MCF 10A (cell line): ENCODE measurements at regions of chr12 and their contacts with region 1.

Region 1: DNA sequence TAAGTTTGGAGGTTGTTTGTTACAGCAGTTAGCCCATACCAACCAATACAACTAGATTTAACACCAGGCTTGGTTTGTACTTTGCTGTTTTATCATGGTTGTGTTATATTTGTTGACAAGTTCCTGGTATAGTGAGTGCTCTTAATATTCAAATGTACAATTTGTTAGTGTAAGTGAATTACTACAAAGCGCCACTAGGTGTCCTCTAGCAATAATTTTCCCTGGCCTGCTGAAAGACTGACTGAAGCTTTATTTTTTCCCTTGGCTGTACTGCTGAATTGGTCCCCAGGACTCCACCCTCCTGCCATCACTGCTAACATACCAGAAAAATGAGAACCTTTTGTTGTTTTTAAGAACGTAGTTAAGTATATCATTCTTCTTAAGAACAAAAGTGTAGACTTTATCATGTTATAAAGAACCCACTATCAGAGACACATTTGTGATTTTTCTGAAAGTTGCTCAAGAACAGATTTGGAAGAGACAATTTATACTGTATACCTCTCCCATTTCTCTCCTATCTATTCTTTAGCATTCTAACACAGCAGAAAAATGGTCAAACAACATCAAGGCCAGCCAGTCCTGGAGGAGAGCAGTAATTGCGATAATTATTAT is 75.3 kb upstream of the FAR2 start:
- DNase-seq: peak; percentile 49
- H3K4me3 Mint-ChIP-seq: no peak overlapping the region
- H3K27ac Mint-ChIP-seq: no peak overlapping the region
- H3K4me1 Mint-ChIP-seq: no peaks in the 10 kb centered on the region
- H3K27me3 Mint-ChIP-seq: peaks cover 40% of the 10 kb centered on the region
- CTCF ChIP-seq: peak; percentile 62

Region 2: GRCh38 chr12:29317556-29318363 is 244.0 kb after region 1 on chr12:
- CTCF ChIA-PET with region 1: interaction called, 46 read pairs
- POLR2A ChIA-PET with region 1: interaction called, 3 read pairs
- intact Hi-C with region 1: loop called (anchors 1 kb)
- DNase-seq: peak; percentile 57
- H3K4me3 Mint-ChIP-seq: no peak overlapping the region
- H3K27ac Mint-ChIP-seq: no peak overlapping the region
- H3K4me1 Mint-ChIP-seq: peaks cover 5% of the 10 kb centered on the region
- H3K27me3 Mint-ChIP-seq: no peaks in the 10 kb centered on the region
- CTCF ChIP-seq: peak; percentile 33

Region 3: DNA sequence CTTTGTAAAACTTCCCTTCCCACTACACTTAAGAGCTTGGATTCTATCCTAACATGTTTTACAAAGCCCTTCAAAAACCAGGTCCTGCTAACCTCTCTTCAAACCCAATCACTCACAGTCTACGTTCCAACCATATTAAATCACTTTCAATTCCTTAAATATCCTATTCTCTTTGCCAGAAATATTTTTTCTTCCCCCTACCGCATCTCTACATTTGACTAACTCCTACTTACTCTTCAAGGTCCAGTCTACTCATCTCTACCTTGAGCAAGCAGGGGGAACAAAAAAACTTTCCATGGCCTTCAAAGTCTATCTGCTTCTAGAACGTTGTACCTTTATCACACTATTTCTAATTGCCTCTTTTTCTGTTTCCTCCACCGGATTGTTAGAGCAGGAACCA is 301.2 kb after region 1 on chr12:
- CTCF ChIA-PET with region 1: no interaction called
- POLR2A ChIA-PET with region 1: no interaction called
- intact Hi-C with region 1: no loop called
- DNase-seq: no peak
- H3K4me3 Mint-ChIP-seq: no peak overlapping the region
- H3K27ac Mint-ChIP-seq: no peak overlapping the region
- H3K4me1 Mint-ChIP-seq: peaks cover 17% of the 10 kb centered on the region
- H3K27me3 Mint-ChIP-seq: no peaks in the 10 kb centered on the region
- CTCF ChIP-seq: no peak